ENCODE measurements at regions of chr10 and their contacts with region 1.

Region 1: DNA sequence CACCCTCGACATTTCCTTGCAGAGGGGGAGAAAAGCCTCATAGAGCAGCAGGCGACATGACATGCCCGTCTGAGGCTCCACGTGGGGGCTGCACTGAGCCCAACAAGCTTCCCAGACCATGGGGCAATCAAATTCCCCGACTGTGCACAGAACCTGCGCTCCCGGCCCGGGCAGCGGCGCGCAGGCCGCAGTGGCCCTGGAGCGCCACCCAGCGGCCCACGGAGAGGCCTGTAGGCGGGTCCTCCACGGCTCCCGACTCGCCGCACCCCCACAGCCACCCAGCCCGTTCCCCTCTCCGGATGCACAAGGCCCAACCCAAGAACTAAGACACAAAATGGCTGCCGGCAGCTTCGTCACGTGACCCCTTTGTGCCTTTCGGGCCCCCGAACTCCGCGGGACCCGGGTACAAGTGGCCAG is 816 bp downstream of the EPC1 start:
- DNase-seq: peak in 34 of 35 experiments; percentile 92 to 98 (median 95)
- ATAC-seq: peak; percentile 83 to 85 (median 84)
- H3K4me3 ChIP-seq: peak overlapping the region; percentile 88 to 98
- H3K4me3 Mint-ChIP-seq: peak overlapping the region; percentile 93 to 94 (median 94)
- H3K27ac ChIP-seq: peak overlapping the region; percentile 100
- H3K27ac Mint-ChIP-seq: peak overlapping the region; percentile 99 to 100
- H3K4me1 ChIP-seq: peaks cover 24 to 36% of the 10 kb centered on the region in 2 experiments
- H3K4me1 Mint-ChIP-seq: peaks cover 76 to 82% (median 78%) of the 10 kb centered on the region in 3 donors
- H3K27me3 ChIP-seq: no peaks in the 10 kb centered on the region
- H3K27me3 Mint-ChIP-seq: no peaks in the 10 kb centered on the region

Region 2: GRCh38 chr10:32065856-32066255 is 280.3 kb before region 1 on chr10:
- CTCF ChIA-PET with region 1: no interaction called
- POLR2A ChIA-PET with region 1: no interaction called
- DNase-seq: no peak
- ATAC-seq: no peak
- H3K4me3 ChIP-seq: no peak overlapping the region
- H3K4me3 Mint-ChIP-seq: no peak overlapping the region
- H3K27ac ChIP-seq: no peak overlapping the region
- H3K27ac Mint-ChIP-seq: no peak overlapping the region
- H3K4me1 ChIP-seq: no peaks in the 10 kb centered on the region
- H3K4me1 Mint-ChIP-seq: no peaks in the 10 kb centered on the region
- H3K27me3 ChIP-seq: peaks cover 0 to 4% of the 10 kb centered on the region in 2 experiments
- H3K27me3 Mint-ChIP-seq: no peaks in the 10 kb centered on the region

Region 3: DNA sequence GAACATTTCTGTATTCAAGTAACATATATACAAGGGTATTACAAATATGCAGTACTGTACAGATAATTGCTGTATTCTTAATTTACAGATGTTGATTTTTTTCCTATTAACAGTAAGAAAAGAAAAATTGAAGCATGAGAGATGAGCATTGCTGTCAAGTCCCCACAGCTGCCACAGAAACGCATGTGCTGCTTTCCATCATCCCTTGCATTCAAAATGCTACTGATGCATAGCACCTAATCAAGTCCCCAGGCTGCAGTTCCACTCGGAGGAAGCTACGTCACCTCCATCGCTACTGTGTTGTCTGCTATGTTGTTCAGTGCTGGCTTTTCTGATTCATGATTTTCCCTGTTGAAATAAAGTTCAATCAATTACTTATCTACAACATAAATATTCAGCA is 77.4 kb before region 1 on chr10:
- CTCF ChIA-PET with region 1: no interaction called
- POLR2A ChIA-PET with region 1: interaction called in 1 of 2 experiments, 12 read pairs
- DNase-seq: no peak
- ATAC-seq: no peak
- H3K4me3 ChIP-seq: no peak overlapping the region
- H3K4me3 Mint-ChIP-seq: no peak overlapping the region
- H3K27ac ChIP-seq: no peak overlapping the region
- H3K27ac Mint-ChIP-seq: peak overlapping the region; percentile 28 to 48
- H3K4me1 ChIP-seq: no peaks in the 10 kb centered on the region
- H3K4me1 Mint-ChIP-seq: peaks cover 0 to 2% (median 0%) of the 10 kb centered on the region in 3 donors
- H3K27me3 ChIP-seq: no peaks in the 10 kb centered on the region
- H3K27me3 Mint-ChIP-seq: no peaks in the 10 kb centered on the region

Region 4: GRCh38 chr10:32357056-32357735 is 11.1 kb after region 1 on chr10:
- CTCF ChIA-PET with region 1: interaction called, 7 to 12 read pairs
- POLR2A ChIA-PET with region 1: interaction called in 1 of 2 experiments, 6 read pairs
- DNase-seq: peak in 24 of 35 experiments; percentile 11 to 61 (median 21)
- ATAC-seq: peak; percentile 41 to 90 (median 60)
- H3K4me3 ChIP-seq: no peak overlapping the region
- H3K4me3 Mint-ChIP-seq: peak overlapping the region; percentile 29 to 51 (median 31)
- H3K27ac ChIP-seq: peak overlapping the region; percentile 61
- H3K27ac Mint-ChIP-seq: peak overlapping the region; percentile 89 to 91
- H3K4me1 ChIP-seq: peaks cover 17 to 52% of the 10 kb centered on the region in 2 experiments
- H3K4me1 Mint-ChIP-seq: peaks cover 78 to 85% (median 83%) of the 10 kb centered on the region in 3 donors
- H3K27me3 ChIP-seq: no peaks in the 10 kb centered on the region
- H3K27me3 Mint-ChIP-seq: no peaks in the 10 kb centered on the region

Region 5: GRCh38 chr10:32378363-32379317 is 32.5 kb after region 1 on chr10:
- CTCF ChIA-PET with region 1: interaction called in 1 of 2 experiments, 10 read pairs
- POLR2A ChIA-PET with region 1: interaction called in 1 of 2 experiments, 11 read pairs
- DNase-seq: peak; percentile 77 to 97 (median 93)
- ATAC-seq: peak; percentile 91 to 97 (median 96)
- H3K4me3 ChIP-seq: peak overlapping the region; percentile 87 to 97
- H3K4me3 Mint-ChIP-seq: no peak overlapping the region
- H3K27ac ChIP-seq: peak overlapping the region; percentile 77
- H3K27ac Mint-ChIP-seq: no peak overlapping the region
- H3K4me1 ChIP-seq: peaks cover 4 to 23% of the 10 kb centered on the region in 2 experiments
- H3K4me1 Mint-ChIP-seq: peaks cover 17 to 22% (median 21%) of the 10 kb centered on the region in 3 donors
- H3K27me3 ChIP-seq: no peaks in the 10 kb centered on the region
- H3K27me3 Mint-ChIP-seq: no peaks in the 10 kb centered on the region

Region 6: DNA sequence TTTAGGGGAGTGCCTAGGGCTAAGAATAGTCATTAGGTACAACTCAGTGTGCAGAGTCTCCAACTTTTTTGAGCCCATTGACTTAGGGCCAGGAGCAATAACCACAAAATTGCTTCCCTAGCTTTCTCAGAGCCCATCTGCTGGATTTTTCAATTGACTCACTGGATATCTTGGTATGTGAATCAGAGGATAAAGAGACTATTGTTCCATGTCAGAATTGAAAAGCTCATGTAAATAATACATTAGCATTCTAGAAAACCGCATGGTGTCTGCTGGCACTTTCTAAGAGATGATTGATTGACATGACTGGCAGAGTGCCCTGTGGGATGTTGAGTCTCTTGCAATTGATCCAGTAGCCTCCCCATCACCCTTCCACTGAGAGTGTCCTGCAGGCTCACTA is 346.0 kb after region 1 on chr10:
- CTCF ChIA-PET with region 1: no interaction called
- POLR2A ChIA-PET with region 1: no interaction called
- DNase-seq: no peak
- ATAC-seq: no peak
- H3K4me3 ChIP-seq: no peak overlapping the region
- H3K4me3 Mint-ChIP-seq: no peak overlapping the region
- H3K27ac ChIP-seq: no peak overlapping the region
- H3K27ac Mint-ChIP-seq: no peak overlapping the region
- H3K4me1 ChIP-seq: no peaks in the 10 kb centered on the region
- H3K4me1 Mint-ChIP-seq: no peaks in the 10 kb centered on the region
- H3K27me3 ChIP-seq: no peaks in the 10 kb centered on the region
- H3K27me3 Mint-ChIP-seq: no peaks in the 10 kb centered on the region

Measured in T-cell (primary cell).